ENCODE measurements at regions of chr20 and their contacts with region 1.

Region 1: DNA sequence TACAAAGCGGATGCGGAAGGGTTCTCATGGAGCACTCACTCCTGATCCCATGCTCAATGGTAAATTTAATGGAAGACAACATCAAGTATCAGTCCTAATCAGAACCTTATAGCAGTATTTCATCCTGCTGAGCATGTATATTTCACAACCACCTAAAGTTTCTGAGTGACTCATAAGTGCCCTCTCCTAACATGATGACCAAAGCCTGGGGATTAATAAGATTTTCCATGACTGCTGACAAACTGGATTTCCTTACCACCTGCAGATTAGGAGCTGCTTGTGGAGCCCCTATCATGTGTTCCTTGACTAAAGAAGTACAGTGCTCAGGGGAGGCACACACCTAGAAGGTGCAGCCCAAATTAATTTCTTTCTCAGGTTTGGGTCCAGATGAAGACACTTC is 112.8 kb downstream of the INSM1 start:
- DNase-seq: no peak
- H3K4me3 Mint-ChIP-seq: no peak overlapping the region
- H3K27ac Mint-ChIP-seq: no peak overlapping the region
- H3K4me1 Mint-ChIP-seq: peaks cover 2% of the 10 kb centered on the region
- H3K27me3 Mint-ChIP-seq: no peaks in the 10 kb centered on the region

Region 2: DNA sequence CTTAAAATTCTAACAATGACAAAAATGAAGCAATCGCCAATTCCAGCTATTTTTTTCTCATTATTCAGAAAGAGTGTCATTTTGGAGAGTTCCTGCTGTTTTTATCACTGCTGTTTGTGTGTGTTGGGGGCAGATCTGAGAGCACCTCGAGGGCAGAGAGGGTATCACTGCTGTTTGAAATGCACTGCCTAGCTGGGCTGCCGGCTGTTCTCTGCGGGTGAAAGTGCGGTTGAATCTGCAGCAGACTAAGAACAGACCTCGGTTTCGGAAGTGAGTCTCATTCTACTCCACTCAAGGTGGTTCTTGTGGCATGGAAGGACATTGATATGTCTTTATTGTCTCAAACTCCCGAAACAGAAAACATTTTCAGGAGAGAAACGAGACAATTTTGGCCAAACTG is 94.5 kb before region 1 on chr20:
- CTCF ChIA-PET with region 1: no interaction called
- POLR2A ChIA-PET with region 1: no interaction called
- DNase-seq: no peak
- H3K4me3 Mint-ChIP-seq: no peak overlapping the region
- H3K27ac Mint-ChIP-seq: no peak overlapping the region
- H3K4me1 Mint-ChIP-seq: no peaks in the 10 kb centered on the region
- H3K27me3 Mint-ChIP-seq: no peaks in the 10 kb centered on the region

Region 3: DNA sequence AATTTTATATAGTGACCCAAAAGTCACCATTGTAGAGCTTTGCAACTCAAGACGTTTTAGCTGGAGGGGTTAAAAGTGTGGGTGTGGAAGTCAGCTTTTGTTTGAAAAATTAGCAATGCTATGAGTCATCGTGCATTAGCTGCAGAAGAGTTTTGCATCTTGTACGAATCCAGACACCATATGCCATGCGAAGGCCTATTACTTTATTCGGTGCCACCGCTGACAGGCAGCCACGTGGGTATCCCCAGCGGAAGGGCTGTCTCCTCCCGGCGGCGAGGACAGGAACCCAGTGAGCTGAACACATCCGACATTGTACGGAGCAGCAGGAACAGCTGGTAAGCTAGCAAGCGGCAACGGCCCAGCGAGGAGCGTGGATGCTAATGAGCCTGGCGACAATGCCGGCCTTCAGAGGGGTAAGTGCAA is 28.4 kb before region 1 on chr20:
- CTCF ChIA-PET with region 1: no interaction called
- POLR2A ChIA-PET with region 1: interaction called, 16 read pairs
- DNase-seq: peak; percentile 66
- H3K4me3 Mint-ChIP-seq: peak overlapping the region; percentile 20
- H3K27ac Mint-ChIP-seq: peak overlapping the region; percentile 38
- H3K4me1 Mint-ChIP-seq: peaks cover 20% of the 10 kb centered on the region
- H3K27me3 Mint-ChIP-seq: no peaks in the 10 kb centered on the region